HepG2 (cell line): ENCODE measurements at regions of chr15 and their contacts with region 1.

Region 1: GRCh38 chr15:94230956-94231722 is at the start of gene MCTP2:
- DNase-seq: peak; percentile 62
- ATAC-seq: peak; percentile 96
- H3K4me3 ChIP-seq: peak within 1 kb of the TSS; percentile 68 to 74 (median 69)
- H3K27ac ChIP-seq: peak within 1 kb of the TSS; percentile 24
- H3K4me1 ChIP-seq: peaks cover 6% of the 10 kb centered on the region; the same call in 1 of the 2 replicates
- H3K27me3 ChIP-seq: no peaks in the 10 kb centered on the region; a peak in 1 of 5 replicates
- CTCF ChIP-seq: peak; percentile 41
- EP300 ChIP-seq: no peak
- POLR2A ChIP-seq: peak; percentile 17 to 52; a peak in 2 of 4 replicates
- RAD21 ChIP-seq: no peak
- total RNA-seq, gene MCTP2: 2.7 and 5.1 TPM in 2 replicates

Region 2: GRCh38 chr15:94247789-94248638 is 16.9 kb after region 1 on chr15:
- CTCF ChIA-PET with region 1: no interaction called
- POLR2A ChIA-PET with region 1: interaction called, 21 read pairs
- in situ Hi-C with region 1: no loop called
- intact Hi-C with region 1: no loop called
- DNase-seq: peak; percentile 82
- ATAC-seq: peak; percentile 92
- H3K4me3 ChIP-seq: peak overlapping the region in 2 of 3 experiments; percentile 8 to 37; a peak in 3 of 6 replicates
- H3K27ac ChIP-seq: peak overlapping the region; percentile 74
- H3K4me1 ChIP-seq: peaks cover 72% of the 10 kb centered on the region
- H3K27me3 ChIP-seq: no peaks in the 10 kb centered on the region
- CTCF ChIP-seq: no peak
- EP300 ChIP-seq: peak in 1 of 2 experiments; percentile 46; a peak in 2 of 4 replicates
- POLR2A ChIP-seq: no peak
- RAD21 ChIP-seq: no peak

Region 3: GRCh38 chr15:94253742-94254141 is 22.6 kb after region 1 on chr15:
- CTCF ChIA-PET with region 1: no interaction called
- POLR2A ChIA-PET with region 1: interaction called, 21 read pairs
- in situ Hi-C with region 1: no loop called
- intact Hi-C with region 1: loop called (anchors 2 kb)
- DNase-seq: no peak
- ATAC-seq: no peak
- H3K4me3 ChIP-seq: no peak overlapping the region
- H3K27ac ChIP-seq: peak overlapping the region; percentile 29
- H3K4me1 ChIP-seq: peaks cover 85% of the 10 kb centered on the region
- H3K27me3 ChIP-seq: no peaks in the 10 kb centered on the region
- CTCF ChIP-seq: no peak
- EP300 ChIP-seq: no peak
- POLR2A ChIP-seq: no peak
- RAD21 ChIP-seq: no peak